Sigmoid colon (tissue), 7 donors: ENCODE measurements at regions of chr3 and their contacts with region 1.

Region 1: DNA sequence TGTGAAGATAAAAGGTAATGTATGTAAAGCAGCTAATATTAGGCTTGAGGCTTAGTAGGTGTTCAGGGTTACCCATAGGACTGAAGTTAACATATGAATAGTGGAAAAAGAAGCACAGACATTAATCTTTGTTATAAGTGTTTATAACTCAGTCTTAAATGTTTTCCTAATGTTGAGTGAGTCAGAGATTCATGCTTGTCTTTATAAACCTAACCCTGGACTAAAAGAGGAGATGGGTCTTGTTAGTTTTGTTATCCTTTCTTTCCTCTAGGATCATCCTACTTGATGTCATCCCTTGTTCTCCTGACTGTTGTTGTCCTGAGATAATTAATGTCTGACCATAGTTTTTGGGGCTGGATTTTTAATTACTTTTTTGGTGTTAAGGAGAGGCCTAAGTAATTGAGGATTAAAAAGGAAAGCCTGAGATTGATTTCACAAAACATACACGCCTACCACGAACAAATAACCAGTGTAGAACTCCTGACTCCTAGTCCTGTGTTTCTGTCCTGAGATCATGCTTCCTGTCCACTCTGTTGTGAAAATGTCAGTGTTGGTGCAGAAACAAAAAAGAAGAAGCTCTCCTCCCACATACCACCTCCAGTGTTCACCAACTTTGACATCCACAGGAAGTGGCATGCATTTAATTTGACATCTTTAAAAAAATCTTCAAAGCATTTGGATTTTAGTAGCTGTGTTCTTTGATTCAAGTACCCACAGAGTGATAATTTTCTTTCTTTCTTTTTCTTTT is 8.4 kb downstream of the MITF start:
- DNase-seq: no peak
- H3K4me3 ChIP-seq: no peak overlapping the region
- H3K27ac ChIP-seq: peak overlapping the region; percentile 72 to 93 (median 90)
- H3K4me1 ChIP-seq: peaks cover 0 to 98% (median 92%) of the 10 kb centered on the region in 4 donors
- H3K27me3 ChIP-seq: no peaks in the 10 kb centered on the region
- CTCF ChIP-seq: no peak
- EP300 ChIP-seq: no peak
- POLR2A ChIP-seq: no peak

Region 2: GRCh38 chr3:69710153-69710977 is 37.3 kb before region 1 on chr3:
- intact Hi-C with region 1: no loop called
- DNase-seq: no peak
- H3K4me3 ChIP-seq: no peak overlapping the region
- H3K27ac ChIP-seq: no peak overlapping the region
- H3K4me1 ChIP-seq: no peaks in the 10 kb centered on the region
- H3K27me3 ChIP-seq: no peaks in the 10 kb centered on the region
- CTCF ChIP-seq: no peak
- EP300 ChIP-seq: no peak
- POLR2A ChIP-seq: no peak

Region 3: DNA sequence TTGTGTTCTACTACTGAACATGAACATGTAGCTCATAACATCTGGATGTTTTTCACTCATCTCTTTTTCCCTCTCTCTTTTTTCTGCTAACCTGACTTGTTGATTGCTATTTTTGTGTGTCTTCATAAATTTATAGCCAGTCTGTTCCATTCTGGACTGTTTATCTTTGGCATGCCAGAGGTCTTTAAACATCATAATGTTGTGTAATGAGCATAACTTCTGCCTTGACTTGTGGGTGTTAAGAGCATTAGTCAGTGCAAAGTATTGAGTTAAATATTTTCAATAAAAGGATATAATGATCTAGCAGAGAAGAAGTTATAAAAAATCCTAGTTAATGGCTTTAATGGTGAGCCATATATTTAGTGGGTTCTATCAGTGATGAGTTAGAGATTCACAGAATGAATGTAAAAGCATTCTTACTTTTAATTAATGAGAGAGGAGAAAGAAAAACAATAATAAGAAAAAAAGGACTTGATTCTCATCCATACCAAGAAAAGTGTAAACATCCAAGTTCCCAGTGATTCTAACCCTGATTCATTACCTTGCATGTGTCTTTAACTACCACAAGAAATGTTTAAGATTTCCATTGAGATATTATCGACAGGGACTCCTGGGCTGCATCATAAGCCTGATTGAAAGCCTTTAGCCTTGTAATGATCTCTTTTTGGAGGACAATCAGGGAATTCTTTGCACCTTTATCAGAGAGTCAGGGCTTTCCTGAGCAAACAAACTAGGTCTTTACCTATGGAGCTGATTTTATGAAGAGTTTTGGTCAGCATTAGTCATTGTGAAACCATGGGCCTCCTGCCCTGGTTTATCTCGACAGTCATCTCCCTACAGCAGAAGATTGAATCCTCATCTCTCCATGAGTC is 14.4 kb after region 1 on chr3:
- intact Hi-C with region 1: loop called (anchors 2 kb)
- DNase-seq: no peak
- H3K4me3 ChIP-seq: no peak overlapping the region
- H3K27ac ChIP-seq: peak overlapping the region; percentile 68 to 84 (median 78)
- H3K4me1 ChIP-seq: peaks cover 0 to 97% (median 86%) of the 10 kb centered on the region in 4 donors
- H3K27me3 ChIP-seq: no peaks in the 10 kb centered on the region
- CTCF ChIP-seq: no peak
- EP300 ChIP-seq: peak in 2 of 4 donors; percentile 33 to 64
- POLR2A ChIP-seq: no peak

Region 4: DNA sequence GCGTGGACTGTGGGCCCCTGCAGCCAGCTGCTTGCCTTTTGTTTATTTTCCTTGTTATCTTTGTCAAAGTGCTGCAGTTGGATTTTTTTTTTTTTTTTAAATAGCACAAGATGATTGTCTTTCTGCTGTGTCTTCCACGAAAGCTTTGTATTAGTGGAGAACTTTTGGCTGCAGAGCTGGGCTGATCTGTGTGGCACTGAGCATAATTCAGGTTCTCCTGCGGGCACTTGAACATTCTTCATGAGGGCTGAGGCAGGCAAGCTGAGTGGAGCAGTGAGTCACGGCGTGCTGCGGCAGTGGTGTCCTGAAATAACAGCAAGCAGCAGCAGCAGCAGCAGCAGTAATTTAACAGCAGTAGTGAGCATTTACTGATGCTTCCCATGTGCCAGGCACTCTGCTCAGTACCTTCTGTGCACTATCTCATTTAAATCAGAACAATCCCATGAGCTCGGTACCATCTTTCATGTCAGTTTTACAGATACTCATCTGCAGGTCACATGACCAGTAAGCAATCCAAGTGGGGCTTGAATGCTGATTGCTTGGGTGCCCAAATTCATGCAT is 37.3 kb after region 1 on chr3:
- intact Hi-C with region 1: loop called (anchors 2 kb)
- DNase-seq: peak; percentile 89
- H3K4me3 ChIP-seq: no peak overlapping the region
- H3K27ac ChIP-seq: peak overlapping the region; percentile 58 to 86 (median 76)
- H3K4me1 ChIP-seq: peaks cover 0 to 79% (median 56%) of the 10 kb centered on the region in 4 donors
- H3K27me3 ChIP-seq: no peaks in the 10 kb centered on the region
- CTCF ChIP-seq: no peak
- EP300 ChIP-seq: peak in 1 of 4 donors; percentile 16
- POLR2A ChIP-seq: no peak